Endothelial cell of umbilical vein (primary cell): ENCODE measurements at regions of chr5 and their contacts with region 1.

Region 1: GRCh38 chr5:28344803-28345433 is 1306.5 kb upstream of the CDH9 start:
- DNase-seq: peak; percentile 41
- H3K4me3 ChIP-seq: no peak overlapping the region
- H3K27ac ChIP-seq: no peak overlapping the region
- H3K4me1 ChIP-seq: no peaks in the 10 kb centered on the region
- H3K27me3 ChIP-seq: no peaks in the 10 kb centered on the region
- CTCF ChIP-seq: peak; percentile 15 to 29
- POLR2A ChIP-seq: no peak

Region 2: DNA sequence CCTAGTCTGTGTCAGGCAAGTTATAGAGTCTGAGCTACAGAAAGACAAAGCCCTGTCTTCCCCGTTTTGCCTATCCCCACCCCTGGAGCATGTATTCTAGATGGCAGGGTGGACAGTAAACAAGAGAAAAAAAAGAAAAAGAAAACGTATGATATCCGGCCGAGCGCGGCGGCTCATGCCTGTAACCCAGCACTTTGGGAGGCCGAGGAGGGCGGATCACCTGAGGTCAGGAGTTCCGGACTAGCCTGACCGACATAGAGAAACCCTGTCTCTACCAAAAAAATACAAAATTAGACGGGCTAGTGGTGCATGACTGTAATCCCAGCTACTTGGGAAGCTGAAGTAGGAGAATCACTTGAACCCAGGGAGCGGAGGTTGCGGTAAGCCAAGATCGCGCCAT is 783.5 kb before region 1 on chr5:
- CTCF ChIA-PET with region 1: no interaction called
- POLR2A ChIA-PET with region 1: no interaction called
- dilution Hi-C with region 1: no loop called
- intact Hi-C with region 1: no loop called
- DNase-seq: no peak
- H3K4me3 ChIP-seq: no peak overlapping the region
- H3K27ac ChIP-seq: no peak overlapping the region
- H3K4me1 ChIP-seq: no peaks in the 10 kb centered on the region
- H3K27me3 ChIP-seq: no peaks in the 10 kb centered on the region
- CTCF ChIP-seq: no peak
- POLR2A ChIP-seq: no peak

Region 3: DNA sequence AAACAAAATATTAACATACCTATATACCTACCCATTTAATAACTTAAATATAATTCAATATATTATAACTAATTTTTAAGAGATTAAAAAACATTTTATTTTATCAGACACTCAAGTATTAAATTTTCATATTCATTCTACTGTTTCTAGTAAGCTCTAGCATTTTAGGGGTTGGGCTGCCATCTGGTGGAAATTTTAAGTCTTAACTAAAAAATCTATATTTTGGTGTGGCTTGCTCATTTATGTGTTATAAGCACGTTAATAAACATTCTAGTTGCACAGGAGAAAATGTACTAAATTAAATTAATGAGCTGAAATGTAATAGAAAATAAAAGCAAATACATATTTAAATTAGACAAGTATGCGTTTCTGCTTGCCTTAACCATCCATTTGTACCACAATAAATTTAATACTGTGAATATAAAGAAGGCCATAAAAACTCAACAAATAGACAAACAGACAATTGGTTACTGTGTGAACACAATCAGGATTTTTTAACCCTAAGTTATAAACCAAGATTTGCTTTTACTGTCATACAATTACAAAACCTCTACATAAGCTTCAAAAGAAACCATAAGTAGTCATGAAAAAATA is 421.7 kb after region 1 on chr5:
- CTCF ChIA-PET with region 1: interaction called, 10 read pairs
- POLR2A ChIA-PET with region 1: no interaction called
- dilution Hi-C with region 1: no loop called
- intact Hi-C with region 1: loop called (anchors 2 kb)
- DNase-seq: peak; percentile 6
- H3K4me3 ChIP-seq: no peak overlapping the region
- H3K27ac ChIP-seq: no peak overlapping the region
- H3K4me1 ChIP-seq: no peaks in the 10 kb centered on the region
- H3K27me3 ChIP-seq: no peaks in the 10 kb centered on the region
- CTCF ChIP-seq: no peak
- POLR2A ChIP-seq: no peak